ENCODE measurements at regions of chr16 and their contacts with region 1.

Region 1: GRCh38 chr16:66740010-66740409 is 11.4 kb downstream of the DYNC1LI2 start:
- DNase-seq: peak; percentile 40
- ATAC-seq: peak; percentile 85
- H3K4me3 Mint-ChIP-seq: no peak overlapping the region
- H3K27ac Mint-ChIP-seq: peak overlapping the region; percentile 90
- H3K4me1 Mint-ChIP-seq: peaks cover 18% of the 10 kb centered on the region
- H3K27me3 Mint-ChIP-seq: no peaks in the 10 kb centered on the region
- CTCF ChIP-seq: peak; percentile 61

Region 2: GRCh38 chr16:66569827-66570405 is 170.1 kb before region 1 on chr16:
- CTCF ChIA-PET with region 1: no interaction called
- POLR2A ChIA-PET with region 1: no interaction called
- DNase-seq: no peak
- ATAC-seq: no peak
- H3K4me3 Mint-ChIP-seq: no peak overlapping the region
- H3K27ac Mint-ChIP-seq: no peak overlapping the region
- H3K4me1 Mint-ChIP-seq: no peaks in the 10 kb centered on the region
- H3K27me3 Mint-ChIP-seq: no peaks in the 10 kb centered on the region
- CTCF ChIP-seq: no peak

Region 3: DNA sequence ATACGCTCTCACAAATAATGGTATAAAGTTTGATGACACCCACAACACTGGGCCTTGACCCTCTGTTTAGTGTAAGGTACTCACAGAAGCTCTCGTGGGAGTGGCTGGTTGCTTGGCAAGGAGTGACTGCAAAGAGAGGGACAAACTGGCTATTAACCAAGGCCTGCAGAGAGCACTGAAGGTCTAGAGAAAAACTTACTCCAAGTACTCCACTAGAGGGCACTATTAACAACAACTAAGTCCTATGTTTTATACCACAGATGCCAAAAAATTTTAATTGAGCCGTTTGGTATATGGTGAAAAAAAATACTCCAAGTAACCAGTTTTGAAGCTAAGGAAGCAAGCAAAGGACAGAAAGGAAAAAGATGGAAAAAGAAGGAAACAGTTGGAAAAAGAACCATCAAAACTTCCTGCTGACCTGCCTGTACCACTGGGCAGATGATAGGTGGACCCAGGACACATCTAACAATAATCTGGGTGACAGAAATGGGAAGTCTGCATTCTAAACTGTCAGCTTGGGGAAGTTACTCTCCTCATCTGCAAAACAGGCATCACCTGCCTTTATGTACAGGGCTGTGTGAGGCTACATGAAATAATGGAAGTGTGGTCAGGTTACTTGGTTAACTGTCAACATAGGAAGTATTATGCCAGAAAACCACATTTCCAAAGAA is 11.8 kb before region 1 on chr16:
- CTCF ChIA-PET with region 1: interaction called, 30 read pairs
- POLR2A ChIA-PET with region 1: no interaction called
- DNase-seq: no peak
- ATAC-seq: peak; percentile 58
- H3K4me3 Mint-ChIP-seq: no peak overlapping the region
- H3K27ac Mint-ChIP-seq: peak overlapping the region; percentile 97
- H3K4me1 Mint-ChIP-seq: peaks cover 36% of the 10 kb centered on the region
- H3K27me3 Mint-ChIP-seq: no peaks in the 10 kb centered on the region
- CTCF ChIP-seq: peak; percentile 19; the same call in 1 of the 2 replicates

Region 4: GRCh38 chr16:66751303-66751991 is 11.4 kb after region 1 on chr16 and contains the start of gene DYNC1LI2:
- CTCF ChIA-PET with region 1: interaction called, 29 read pairs
- POLR2A ChIA-PET with region 1: no interaction called
- DNase-seq: peak; percentile 77
- ATAC-seq: peak; percentile 94
- H3K4me3 Mint-ChIP-seq: peak within 1 kb of the TSS; percentile 87
- H3K27ac Mint-ChIP-seq: peak within 1 kb of the TSS; percentile 81
- H3K4me1 Mint-ChIP-seq: peaks cover 25% of the 10 kb centered on the region
- H3K27me3 Mint-ChIP-seq: peaks cover 21% of the 10 kb centered on the region
- CTCF ChIP-seq: peak; percentile 74
- total RNA-seq, gene DYNC1LI2: 82.7 to 89.8 TPM (median 89.7 TPM) in 3 replicates